ENCODE measurements at regions of chr1 and their contacts with region 1.

Region 1: GRCh38 chr1:119656410-119656955 is 8.4 kb upstream of the ZNF697 start:
- DNase-seq: no peak
- H3K4me3 Mint-ChIP-seq: no peak overlapping the region
- H3K27ac Mint-ChIP-seq: peak overlapping the region; percentile 74
- H3K4me1 Mint-ChIP-seq: peaks cover 62% of the 10 kb centered on the region
- H3K27me3 Mint-ChIP-seq: peaks cover 6% of the 10 kb centered on the region

Region 2: GRCh38 chr1:119387858-119388257 is 268.6 kb before region 1 on chr1:
- intact Hi-C with region 1: no loop called
- DNase-seq: no peak
- H3K4me3 Mint-ChIP-seq: no peak overlapping the region
- H3K27ac Mint-ChIP-seq: no peak overlapping the region
- H3K4me1 Mint-ChIP-seq: no peaks in the 10 kb centered on the region
- H3K27me3 Mint-ChIP-seq: no peaks in the 10 kb centered on the region

Region 3: GRCh38 chr1:119582801-119583200 is 73.7 kb before region 1 on chr1:
- intact Hi-C with region 1: no loop called
- DNase-seq: no peak
- H3K4me3 Mint-ChIP-seq: no peak overlapping the region
- H3K27ac Mint-ChIP-seq: no peak overlapping the region
- H3K4me1 Mint-ChIP-seq: no peaks in the 10 kb centered on the region
- H3K27me3 Mint-ChIP-seq: peaks cover 5% of the 10 kb centered on the region

Region 4: GRCh38 chr1:119635811-119636390 is 20.6 kb before region 1 on chr1:
- intact Hi-C with region 1: loop called (anchors 1 kb)
- DNase-seq: no peak
- H3K4me3 Mint-ChIP-seq: no peak overlapping the region
- H3K27ac Mint-ChIP-seq: no peak overlapping the region
- H3K4me1 Mint-ChIP-seq: peaks cover 21% of the 10 kb centered on the region
- H3K27me3 Mint-ChIP-seq: peaks cover 19% of the 10 kb centered on the region

Region 5: DNA sequence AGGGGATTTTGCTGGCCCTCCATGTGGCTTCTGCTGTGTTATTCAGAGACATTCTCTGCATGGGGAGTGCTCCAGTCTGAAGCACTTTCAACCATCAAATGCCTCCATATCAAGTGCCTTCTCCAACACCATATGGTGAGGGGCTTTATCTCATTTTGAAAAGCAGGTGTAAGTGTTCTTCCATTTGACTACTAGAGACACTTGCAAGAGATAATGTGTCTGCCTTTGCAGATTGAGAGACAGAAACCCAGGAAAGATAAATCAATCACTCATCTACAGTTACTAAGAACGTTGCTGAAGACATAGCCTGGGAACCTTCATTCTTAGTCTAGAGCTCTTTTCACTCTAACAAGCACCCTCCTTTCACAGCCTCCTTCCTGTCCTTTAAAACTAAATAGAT is 184.3 kb after region 1 on chr1:
- intact Hi-C with region 1: no loop called
- DNase-seq: no peak
- H3K4me3 Mint-ChIP-seq: no peak overlapping the region
- H3K27ac Mint-ChIP-seq: no peak overlapping the region
- H3K4me1 Mint-ChIP-seq: peaks cover 1% of the 10 kb centered on the region
- H3K27me3 Mint-ChIP-seq: peaks cover 48% of the 10 kb centered on the region